ENCODE measurements at regions of chr1 and their contacts with region 1.

Region 1: GRCh38 chr1:220454155-220454777 is 73.7 kb upstream of the MARK1 start:
- DNase-seq: no peak
- ATAC-seq: no peak
- H3K4me3 ChIP-seq: no peak overlapping the region
- H3K27ac ChIP-seq: no peak overlapping the region
- H3K4me1 ChIP-seq: no peaks in the 10 kb centered on the region
- H3K27me3 ChIP-seq: no peaks in the 10 kb centered on the region
- CTCF ChIP-seq: no peak; the same call in 1 of the 2 replicates
- POLR2A ChIP-seq: no peak
- RAD21 ChIP-seq: no peak

Region 2: DNA sequence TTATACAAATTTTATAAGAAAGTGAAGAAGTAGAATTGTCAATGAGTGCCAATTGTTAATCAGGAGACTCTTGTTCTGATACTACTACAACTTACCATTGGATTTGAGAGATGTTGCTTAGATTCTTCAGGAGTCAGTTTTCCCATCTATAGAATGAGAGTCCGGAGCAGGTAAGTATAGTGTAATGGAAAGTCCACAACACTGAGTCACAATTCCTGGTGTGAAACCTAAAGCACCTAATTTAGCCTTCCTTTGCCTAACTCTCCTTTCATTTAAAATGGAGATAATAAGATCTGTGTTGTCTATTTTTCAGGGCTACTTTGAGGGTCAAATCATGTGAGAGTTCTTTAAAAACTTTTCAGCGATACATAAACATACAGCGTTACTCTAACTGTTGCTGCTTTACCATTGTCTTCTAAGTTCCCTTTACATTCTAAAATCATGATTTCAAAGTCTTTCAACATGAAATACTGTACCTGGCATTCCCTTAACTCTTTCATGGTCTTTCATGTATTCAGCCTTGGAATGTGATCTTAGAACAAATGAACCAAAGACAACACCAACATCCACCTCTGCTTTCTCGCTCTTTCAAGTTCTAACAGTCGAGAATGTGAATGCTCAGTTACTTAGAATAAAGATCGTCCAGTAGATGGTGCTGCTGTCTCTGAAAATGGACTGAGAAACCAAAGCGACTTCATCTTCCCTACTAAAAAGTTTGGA is 616.8 kb before region 1 on chr1:
- CTCF ChIA-PET with region 1: no interaction called
- POLR2A ChIA-PET with region 1: no interaction called
- dilution Hi-C with region 1: no loop called
- in situ Hi-C with region 1: no loop called
- intact Hi-C with region 1: loop called (anchors 10 kb)
- DNase-seq: peak; percentile 54
- ATAC-seq: peak; percentile 72
- H3K4me3 ChIP-seq: no peak overlapping the region
- H3K27ac ChIP-seq: no peak overlapping the region
- H3K4me1 ChIP-seq: no peaks in the 10 kb centered on the region
- H3K27me3 ChIP-seq: peaks cover 2% of the 10 kb centered on the region; the same call in 1 of the 2 replicates
- CTCF ChIP-seq: peak; percentile 51
- POLR2A ChIP-seq: no peak
- RAD21 ChIP-seq: peak; percentile 52

Region 3: DNA sequence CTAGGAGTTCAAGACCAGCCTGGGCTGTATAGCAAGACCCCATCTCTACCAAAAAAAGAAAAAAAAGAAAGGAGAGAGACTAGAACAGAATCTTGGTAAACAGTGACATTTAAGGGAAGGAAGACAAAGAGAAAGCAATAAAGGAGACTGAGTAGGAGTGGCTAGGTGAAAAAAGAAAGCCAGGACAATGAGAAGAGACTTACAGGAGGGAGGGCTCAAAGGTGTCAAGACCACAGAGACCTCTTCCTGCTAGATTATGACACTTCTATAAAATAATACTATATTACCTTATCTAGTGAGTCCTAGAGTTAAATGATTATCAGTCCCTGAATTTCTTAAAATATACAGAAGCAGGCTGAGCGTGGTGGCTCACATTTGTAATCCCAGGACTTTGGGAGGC is 397.9 kb before region 1 on chr1:
- CTCF ChIA-PET with region 1: no interaction called
- POLR2A ChIA-PET with region 1: no interaction called
- dilution Hi-C with region 1: no loop called
- in situ Hi-C with region 1: no loop called
- intact Hi-C with region 1: no loop called
- DNase-seq: no peak
- ATAC-seq: no peak
- H3K4me3 ChIP-seq: no peak overlapping the region
- H3K27ac ChIP-seq: no peak overlapping the region
- H3K4me1 ChIP-seq: no peaks in the 10 kb centered on the region
- H3K27me3 ChIP-seq: no peaks in the 10 kb centered on the region
- CTCF ChIP-seq: no peak
- POLR2A ChIP-seq: no peak
- RAD21 ChIP-seq: no peak

Measured in IMR-90 (cell line).